ENCODE measurements at regions of chr9 and their contacts with region 1.

Region 1: GRCh38 chr9:84139296-84140070 is 158.9 kb downstream of the RMI1 start:
- DNase-seq: peak; percentile 90
- H3K4me3 Mint-ChIP-seq: peak overlapping the region; percentile 67
- H3K27ac Mint-ChIP-seq: peak overlapping the region; percentile 88
- H3K4me1 Mint-ChIP-seq: peaks cover 29% of the 10 kb centered on the region
- H3K27me3 Mint-ChIP-seq: no peaks in the 10 kb centered on the region
- CTCF ChIP-seq: no peak

Region 2: DNA sequence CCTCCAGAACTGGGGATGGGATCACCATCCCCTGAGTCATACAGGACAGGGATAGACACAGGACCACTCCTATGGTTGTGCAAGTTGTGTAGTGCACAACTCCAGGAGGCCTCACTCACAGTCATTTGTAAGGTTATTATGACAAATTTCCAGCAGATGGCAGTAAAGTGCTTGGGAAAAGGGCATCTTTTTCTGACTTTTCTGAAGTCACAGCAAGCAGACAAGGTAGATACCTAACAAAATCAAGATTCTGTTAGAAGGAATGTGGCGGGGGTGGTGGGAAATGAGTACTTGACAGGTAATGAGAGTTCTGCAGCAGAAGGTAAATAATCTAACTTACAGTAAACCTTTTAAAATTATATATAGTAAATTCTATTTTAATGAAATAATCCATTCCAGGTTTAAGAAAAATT is 201.6 kb before region 1 on chr9:
- CTCF ChIA-PET with region 1: interaction called, 3 read pairs
- POLR2A ChIA-PET with region 1: interaction called, 19 read pairs
- intact Hi-C with region 1: loop called (anchors 5 kb)
- DNase-seq: peak; percentile 83
- H3K4me3 Mint-ChIP-seq: no peak overlapping the region
- H3K27ac Mint-ChIP-seq: no peak overlapping the region
- H3K4me1 Mint-ChIP-seq: peaks cover 41% of the 10 kb centered on the region
- H3K27me3 Mint-ChIP-seq: no peaks in the 10 kb centered on the region
- CTCF ChIP-seq: peak; percentile 67

Region 3: GRCh38 chr9:83965350-83966208 is 173.9 kb before region 1 on chr9:
- CTCF ChIA-PET with region 1: interaction called, 3 read pairs
- POLR2A ChIA-PET with region 1: interaction called, 24 read pairs
- intact Hi-C with region 1: no loop called
- DNase-seq: peak; percentile 34
- H3K4me3 Mint-ChIP-seq: no peak overlapping the region
- H3K27ac Mint-ChIP-seq: no peak overlapping the region
- H3K4me1 Mint-ChIP-seq: peaks cover 24% of the 10 kb centered on the region
- H3K27me3 Mint-ChIP-seq: no peaks in the 10 kb centered on the region
- CTCF ChIP-seq: no peak

Region 4: GRCh38 chr9:84107995-84108394 is 31.5 kb before region 1 on chr9:
- CTCF ChIA-PET with region 1: no interaction called
- POLR2A ChIA-PET with region 1: interaction called, 12 read pairs
- intact Hi-C with region 1: no loop called
- DNase-seq: peak; percentile 20
- H3K4me3 Mint-ChIP-seq: no peak overlapping the region
- H3K27ac Mint-ChIP-seq: no peak overlapping the region
- H3K4me1 Mint-ChIP-seq: peaks cover 30% of the 10 kb centered on the region
- H3K27me3 Mint-ChIP-seq: no peaks in the 10 kb centered on the region
- CTCF ChIP-seq: no peak

Region 5: GRCh38 chr9:84187090-84187489 is 47.6 kb after region 1 on chr9:
- CTCF ChIA-PET with region 1: interaction called, 5 read pairs
- POLR2A ChIA-PET with region 1: interaction called, 16 read pairs
- intact Hi-C with region 1: no loop called
- DNase-seq: no peak
- H3K4me3 Mint-ChIP-seq: no peak overlapping the region
- H3K27ac Mint-ChIP-seq: no peak overlapping the region
- H3K4me1 Mint-ChIP-seq: peaks cover 4% of the 10 kb centered on the region
- H3K27me3 Mint-ChIP-seq: no peaks in the 10 kb centered on the region
- CTCF ChIP-seq: no peak

Region 6: DNA sequence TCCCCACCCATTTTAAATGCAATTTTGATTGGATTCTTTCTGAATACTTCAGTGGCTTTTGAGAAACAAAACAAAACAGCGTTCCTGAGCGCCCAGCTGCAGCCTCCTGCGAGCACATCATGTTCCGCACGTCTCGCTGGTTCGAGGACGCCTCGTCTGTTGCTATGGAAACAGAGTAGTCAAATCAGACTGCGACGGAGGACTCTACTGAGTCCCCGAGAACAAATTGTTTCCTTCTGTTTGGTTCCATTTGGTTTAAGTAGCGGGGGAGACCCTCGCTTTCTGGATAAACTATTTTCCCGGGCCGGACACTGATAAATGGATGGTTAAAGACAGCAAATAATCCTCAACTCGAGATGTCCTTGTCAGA is 132.0 kb after region 1 on chr9:
- CTCF ChIA-PET with region 1: no interaction called
- POLR2A ChIA-PET with region 1: no interaction called
- intact Hi-C with region 1: no loop called
- DNase-seq: no peak
- H3K4me3 Mint-ChIP-seq: no peak overlapping the region
- H3K27ac Mint-ChIP-seq: no peak overlapping the region
- H3K4me1 Mint-ChIP-seq: no peaks in the 10 kb centered on the region
- H3K27me3 Mint-ChIP-seq: no peaks in the 10 kb centered on the region
- CTCF ChIP-seq: no peak